Caco-2 (cell line): ENCODE measurements at regions of chr13 and their contacts with region 1.

Region 1: GRCh38 chr13:59771272-59771671 is 392.5 kb downstream of the DIAPH3 start:
- DNase-seq: peak in 1 of 2 experiments; percentile 35
- H3K4me3 ChIP-seq: no peak overlapping the region
- H3K4me3 Mint-ChIP-seq: no peak overlapping the region
- H3K27ac Mint-ChIP-seq: no peak overlapping the region
- H3K4me1 ChIP-seq: peaks cover 92% of the 10 kb centered on the region
- H3K4me1 Mint-ChIP-seq: peaks cover 43% of the 10 kb centered on the region
- H3K27me3 ChIP-seq: no peaks in the 10 kb centered on the region
- H3K27me3 Mint-ChIP-seq: no peaks in the 10 kb centered on the region
- CTCF ChIP-seq: peak; percentile 52 to 74

Region 2: GRCh38 chr13:59607780-59608233 is 163.5 kb before region 1 on chr13:
- CTCF ChIA-PET with region 1: no interaction called
- POLR2A ChIA-PET with region 1: no interaction called
- intact Hi-C with region 1: loop called (anchors 5 kb)
- DNase-seq: peak; percentile 57 to 69
- H3K4me3 ChIP-seq: no peak overlapping the region
- H3K4me3 Mint-ChIP-seq: peak overlapping the region; percentile 55
- H3K27ac Mint-ChIP-seq: peak overlapping the region; percentile 81
- H3K4me1 ChIP-seq: peaks cover 26% of the 10 kb centered on the region
- H3K4me1 Mint-ChIP-seq: peaks cover 22% of the 10 kb centered on the region
- H3K27me3 ChIP-seq: no peaks in the 10 kb centered on the region
- H3K27me3 Mint-ChIP-seq: no peaks in the 10 kb centered on the region
- CTCF ChIP-seq: no peak

Region 3: DNA sequence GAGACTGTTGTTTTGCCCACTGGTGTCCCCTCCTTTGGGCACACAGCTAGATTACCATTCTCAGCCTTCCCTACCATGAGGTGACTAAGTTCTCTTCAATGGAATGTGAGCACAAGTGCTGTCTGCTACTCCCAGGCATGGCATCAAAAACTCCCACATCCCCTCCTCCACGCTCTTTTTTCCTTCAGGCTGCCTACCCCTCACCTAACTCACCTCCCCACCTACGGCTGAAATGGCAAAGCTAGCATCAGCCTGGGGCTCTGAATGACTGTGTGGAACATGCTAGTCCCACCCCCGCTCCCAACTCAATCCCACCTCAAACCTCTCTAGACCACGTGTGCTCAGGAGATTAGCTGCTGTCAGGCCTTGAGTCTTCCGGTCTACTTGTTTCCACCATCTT is 119.8 kb before region 1 on chr13:
- CTCF ChIA-PET with region 1: no interaction called
- POLR2A ChIA-PET with region 1: no interaction called
- intact Hi-C with region 1: no loop called
- DNase-seq: no peak
- H3K4me3 ChIP-seq: no peak overlapping the region
- H3K4me3 Mint-ChIP-seq: no peak overlapping the region
- H3K27ac Mint-ChIP-seq: no peak overlapping the region
- H3K4me1 ChIP-seq: no peaks in the 10 kb centered on the region
- H3K4me1 Mint-ChIP-seq: no peaks in the 10 kb centered on the region
- H3K27me3 ChIP-seq: no peaks in the 10 kb centered on the region; the same call in 1 of the 2 replicates
- H3K27me3 Mint-ChIP-seq: no peaks in the 10 kb centered on the region
- CTCF ChIP-seq: no peak

Region 4: DNA sequence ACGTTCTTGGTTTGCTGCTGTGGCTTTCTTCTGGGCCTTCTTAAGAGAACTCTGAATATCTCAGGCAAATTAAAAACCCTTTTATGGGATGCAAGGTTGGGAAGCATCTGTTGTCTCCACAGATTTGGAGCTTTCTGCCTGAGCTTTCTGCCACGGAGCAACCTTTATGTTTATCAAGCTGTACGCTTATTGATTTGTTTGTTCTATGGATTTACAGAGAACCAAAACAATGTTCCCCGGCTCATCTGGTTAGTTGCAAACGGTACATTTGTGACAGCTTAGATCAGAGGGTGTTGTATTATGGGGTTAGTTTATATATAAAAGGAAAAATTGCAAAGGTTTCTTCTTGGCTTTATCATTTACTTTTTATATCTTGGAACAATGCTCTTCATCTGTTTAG is 87.2 kb before region 1 on chr13:
- CTCF ChIA-PET with region 1: interaction called, 12 read pairs
- POLR2A ChIA-PET with region 1: no interaction called
- intact Hi-C with region 1: loop called (anchors 1 kb)
- DNase-seq: no peak
- H3K4me3 ChIP-seq: no peak overlapping the region
- H3K4me3 Mint-ChIP-seq: no peak overlapping the region
- H3K27ac Mint-ChIP-seq: peak overlapping the region; percentile 4
- H3K4me1 ChIP-seq: peaks cover 90% of the 10 kb centered on the region
- H3K4me1 Mint-ChIP-seq: peaks cover 48% of the 10 kb centered on the region
- H3K27me3 ChIP-seq: no peaks in the 10 kb centered on the region
- H3K27me3 Mint-ChIP-seq: no peaks in the 10 kb centered on the region
- CTCF ChIP-seq: no peak

Region 5: GRCh38 chr13:59715611-59716010 is 55.7 kb before region 1 on chr13:
- CTCF ChIA-PET with region 1: interaction called, 3 read pairs
- POLR2A ChIA-PET with region 1: no interaction called
- intact Hi-C with region 1: loop called (anchors 1 kb)
- DNase-seq: peak in 1 of 2 experiments; percentile 60
- H3K4me3 ChIP-seq: no peak overlapping the region
- H3K4me3 Mint-ChIP-seq: no peak overlapping the region
- H3K27ac Mint-ChIP-seq: peak overlapping the region; percentile 72
- H3K4me1 ChIP-seq: peaks cover 82% of the 10 kb centered on the region
- H3K4me1 Mint-ChIP-seq: peaks cover 13% of the 10 kb centered on the region
- H3K27me3 ChIP-seq: no peaks in the 10 kb centered on the region
- H3K27me3 Mint-ChIP-seq: no peaks in the 10 kb centered on the region
- CTCF ChIP-seq: no peak

Region 6: DNA sequence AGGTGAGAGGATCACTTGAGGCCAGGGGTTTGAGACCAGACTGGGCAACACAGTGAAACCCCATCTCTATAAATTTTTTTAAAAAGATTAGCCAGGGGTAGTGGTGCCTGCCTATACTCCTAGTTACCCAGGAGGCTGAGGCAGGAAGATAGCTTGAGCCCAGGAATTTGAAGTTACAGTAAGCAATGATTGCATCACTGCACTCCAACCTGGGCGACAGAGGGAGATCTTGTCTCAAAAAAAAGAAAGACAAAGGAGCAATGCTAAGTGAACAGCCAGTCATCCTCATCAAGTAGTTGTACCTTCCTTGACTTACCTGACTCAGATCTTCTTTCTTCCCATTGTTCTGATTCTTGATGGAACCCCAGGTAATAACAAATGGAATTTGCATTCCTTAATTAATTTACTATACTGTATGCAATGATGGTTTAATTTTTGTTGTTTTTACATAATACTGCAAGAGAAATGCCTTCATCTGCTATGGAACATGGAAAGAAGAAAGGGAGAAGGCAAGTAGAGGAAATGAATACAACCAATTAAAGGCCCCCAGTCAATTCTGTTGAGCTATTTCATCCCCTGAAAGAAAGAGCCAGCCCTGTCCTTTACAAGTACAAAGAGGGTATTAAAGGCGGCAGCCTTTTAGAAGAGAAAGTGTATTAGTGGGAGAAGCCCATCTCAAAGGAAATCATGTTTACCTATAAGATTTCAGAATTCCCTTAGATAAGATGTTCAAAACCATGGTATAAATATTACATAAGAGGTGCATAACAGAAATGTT is 75.8 kb after region 1 on chr13:
- CTCF ChIA-PET with region 1: interaction called, 3 read pairs
- POLR2A ChIA-PET with region 1: no interaction called
- intact Hi-C with region 1: loop called (anchors 1 kb)
- DNase-seq: peak; percentile 24 to 43
- H3K4me3 ChIP-seq: no peak overlapping the region
- H3K4me3 Mint-ChIP-seq: no peak overlapping the region
- H3K27ac Mint-ChIP-seq: no peak overlapping the region
- H3K4me1 ChIP-seq: peaks cover 58% of the 10 kb centered on the region
- H3K4me1 Mint-ChIP-seq: peaks cover 55% of the 10 kb centered on the region
- H3K27me3 ChIP-seq: no peaks in the 10 kb centered on the region
- H3K27me3 Mint-ChIP-seq: no peaks in the 10 kb centered on the region
- CTCF ChIP-seq: no peak

Region 7: GRCh38 chr13:60226507-60226906 is 455.2 kb after region 1 on chr13:
- CTCF ChIA-PET with region 1: no interaction called
- POLR2A ChIA-PET with region 1: no interaction called
- intact Hi-C with region 1: loop called (anchors 2 kb)
- DNase-seq: peak; percentile 69 to 79
- H3K4me3 ChIP-seq: no peak overlapping the region
- H3K4me3 Mint-ChIP-seq: no peak overlapping the region
- H3K27ac Mint-ChIP-seq: no peak overlapping the region
- H3K4me1 ChIP-seq: peaks cover 25% of the 10 kb centered on the region
- H3K4me1 Mint-ChIP-seq: peaks cover 27% of the 10 kb centered on the region
- H3K27me3 ChIP-seq: no peaks in the 10 kb centered on the region
- H3K27me3 Mint-ChIP-seq: no peaks in the 10 kb centered on the region
- CTCF ChIP-seq: peak; percentile 55 to 76

Region 8: GRCh38 chr13:60318186-60318585 is 546.9 kb after region 1 on chr13:
- CTCF ChIA-PET with region 1: no interaction called
- POLR2A ChIA-PET with region 1: no interaction called
- intact Hi-C with region 1: no loop called
- DNase-seq: no peak
- H3K4me3 ChIP-seq: no peak overlapping the region
- H3K4me3 Mint-ChIP-seq: no peak overlapping the region
- H3K27ac Mint-ChIP-seq: no peak overlapping the region
- H3K4me1 ChIP-seq: no peaks in the 10 kb centered on the region
- H3K4me1 Mint-ChIP-seq: no peaks in the 10 kb centered on the region
- H3K27me3 ChIP-seq: no peaks in the 10 kb centered on the region
- H3K27me3 Mint-ChIP-seq: no peaks in the 10 kb centered on the region
- CTCF ChIP-seq: no peak